ENCODE measurements at regions of chr21 and their contacts with region 1.

Region 1: GRCh38 chr21:17491716-17492414 is 21.0 kb upstream of the CXADR start:
- DNase-seq: no peak
- H3K4me3 Mint-ChIP-seq: peak overlapping the region; percentile 2
- H3K27ac Mint-ChIP-seq: no peak overlapping the region
- H3K4me1 Mint-ChIP-seq: peaks cover 18% of the 10 kb centered on the region
- H3K27me3 Mint-ChIP-seq: peaks cover 13% of the 10 kb centered on the region

Region 2: DNA sequence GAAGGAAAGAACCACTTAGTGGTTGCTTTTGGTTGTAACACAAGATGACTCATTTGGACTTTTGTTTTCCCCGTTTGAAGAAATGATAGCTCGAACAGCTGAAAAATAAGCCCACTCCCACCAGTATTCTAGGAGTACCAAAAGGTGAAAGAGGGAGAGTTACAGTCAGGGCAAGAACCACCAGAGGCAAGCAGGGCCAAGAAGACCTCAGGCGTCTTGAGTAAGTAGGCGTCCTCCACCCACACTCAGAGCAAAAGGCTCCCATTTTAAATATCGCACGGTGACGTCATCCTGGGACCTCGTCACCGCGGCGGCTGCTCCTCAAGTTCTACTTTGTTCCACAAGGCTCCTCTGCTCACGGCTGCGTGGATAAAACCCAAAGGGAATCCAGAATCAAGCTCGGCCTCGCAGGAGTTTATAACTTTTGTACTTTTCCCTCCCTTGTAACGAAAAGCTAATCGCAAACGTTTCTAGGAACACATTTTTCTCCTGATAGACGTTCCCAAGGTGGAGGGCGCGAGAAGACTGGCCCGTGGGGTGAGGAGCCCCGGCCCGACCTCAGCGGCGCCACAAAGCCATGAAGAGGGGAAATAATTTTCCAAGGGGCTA is 119.7 kb after region 1 on chr21:
- intact Hi-C with region 1: loop called (anchors 5 kb)
- DNase-seq: peak; percentile 94
- H3K4me3 Mint-ChIP-seq: peak overlapping the region; percentile 84
- H3K27ac Mint-ChIP-seq: peak overlapping the region; percentile 96
- H3K4me1 Mint-ChIP-seq: peaks cover 46% of the 10 kb centered on the region
- H3K27me3 Mint-ChIP-seq: no peaks in the 10 kb centered on the region

Measured in activated CD4-positive, alpha-beta T cell treated with anti-CD3 and anti-CD28 coated beads, Interleukin-2, amount 10 ng/mL, durations not matched to agents 24 days and 14 days (primary cell).